SK-N-SH (cell line): ENCODE measurements at regions of chr3 and their contacts with region 1.

Region 1: DNA sequence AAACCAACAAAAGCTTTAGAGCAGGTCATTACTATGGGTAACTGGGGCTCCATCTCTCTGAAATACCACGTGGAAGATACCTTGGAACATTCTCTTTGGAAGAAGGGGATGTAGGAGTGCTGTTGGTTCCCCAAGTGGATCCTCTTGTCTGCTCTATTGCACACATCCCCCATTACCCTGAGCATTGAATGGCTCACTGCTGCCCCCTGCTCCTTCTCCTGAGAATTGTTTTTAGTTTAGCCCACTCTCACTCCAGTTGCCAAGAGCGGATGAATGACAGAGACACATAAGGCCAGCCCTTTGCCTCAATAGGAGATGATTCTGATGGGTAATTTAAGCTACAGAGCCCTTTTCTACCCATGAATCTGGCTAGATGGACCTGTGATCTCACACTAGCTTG is 135.6 kb upstream of the SUCLG2 start:
- DNase-seq: peak; percentile 56
- H3K4me3 ChIP-seq: no peak overlapping the region
- H3K27ac ChIP-seq: no peak overlapping the region
- H3K4me1 ChIP-seq: no peaks in the 10 kb centered on the region
- H3K27me3 ChIP-seq: no peaks in the 10 kb centered on the region
- CTCF ChIP-seq: peak; percentile 67
- EP300 ChIP-seq: no peak
- RAD21 ChIP-seq: peak; percentile 94

Region 2: DNA sequence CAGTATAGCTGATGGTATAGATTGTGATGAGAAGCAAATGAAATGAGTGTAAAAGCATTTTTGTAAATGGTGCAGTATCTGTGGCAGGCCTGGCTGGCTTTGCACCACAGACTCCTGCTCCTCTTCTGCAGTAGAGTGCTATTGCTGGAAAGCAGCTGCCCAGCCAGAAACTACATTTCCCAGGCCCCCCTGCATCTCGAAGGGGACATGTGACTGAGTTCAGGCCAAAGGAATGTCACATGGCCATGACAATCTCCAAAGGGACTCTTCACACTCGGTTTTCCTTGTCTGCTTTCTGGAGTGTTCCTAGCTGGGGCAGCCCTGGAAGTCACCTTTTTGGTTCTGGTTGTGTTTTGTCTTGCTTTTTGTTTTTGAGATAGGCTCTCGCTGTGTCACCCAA is 412.7 kb before region 1 on chr3:
- CTCF ChIA-PET with region 1: interaction called, 159 read pairs
- POLR2A ChIA-PET with region 1: no interaction called
- DNase-seq: no peak
- H3K4me3 ChIP-seq: no peak overlapping the region
- H3K27ac ChIP-seq: no peak overlapping the region
- H3K4me1 ChIP-seq: no peaks in the 10 kb centered on the region
- H3K27me3 ChIP-seq: no peaks in the 10 kb centered on the region
- CTCF ChIP-seq: no peak
- EP300 ChIP-seq: no peak
- RAD21 ChIP-seq: no peak

Region 3: DNA sequence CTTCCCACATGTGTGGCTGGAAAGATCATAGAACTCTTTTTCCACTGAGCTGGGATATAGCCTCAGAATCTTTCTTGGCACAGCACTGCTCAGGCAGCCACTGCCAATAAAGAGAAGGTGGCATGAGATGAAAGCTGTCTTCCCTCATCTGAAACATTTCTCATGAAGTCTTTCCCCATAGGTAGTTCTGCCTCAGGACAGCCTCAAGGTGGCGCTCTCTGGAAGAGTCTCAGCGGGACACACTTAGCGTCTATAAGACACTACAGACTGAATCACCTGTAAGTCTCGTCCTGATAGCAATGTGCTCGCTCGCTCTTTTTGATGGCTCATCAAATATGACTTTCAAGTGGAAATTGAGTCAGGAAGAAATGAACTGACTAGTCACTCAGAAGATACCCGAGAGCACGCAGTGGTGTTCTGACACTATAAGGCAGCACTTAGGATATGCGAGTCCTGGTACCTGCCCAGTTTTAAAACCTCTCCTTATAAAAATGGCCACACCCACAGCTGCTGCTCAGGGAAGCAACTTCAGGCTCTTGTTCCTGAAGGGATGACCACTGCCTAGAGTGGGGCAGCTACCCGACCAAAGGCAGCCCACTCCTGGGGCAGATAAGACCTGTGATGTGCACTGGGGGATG is 405.2 kb before region 1 on chr3:
- CTCF ChIA-PET with region 1: interaction called, 159 read pairs
- POLR2A ChIA-PET with region 1: no interaction called
- DNase-seq: peak; percentile 42
- H3K4me3 ChIP-seq: no peak overlapping the region
- H3K27ac ChIP-seq: no peak overlapping the region
- H3K4me1 ChIP-seq: no peaks in the 10 kb centered on the region
- H3K27me3 ChIP-seq: no peaks in the 10 kb centered on the region
- CTCF ChIP-seq: peak; percentile 71
- EP300 ChIP-seq: no peak
- RAD21 ChIP-seq: peak; percentile 77

Region 4: GRCh38 chr3:67719333-67719732 is 70.7 kb before region 1 on chr3:
- CTCF ChIA-PET with region 1: no interaction called
- POLR2A ChIA-PET with region 1: no interaction called
- DNase-seq: no peak
- H3K4me3 ChIP-seq: no peak overlapping the region
- H3K27ac ChIP-seq: no peak overlapping the region
- H3K4me1 ChIP-seq: no peaks in the 10 kb centered on the region
- H3K27me3 ChIP-seq: no peaks in the 10 kb centered on the region
- CTCF ChIP-seq: no peak
- EP300 ChIP-seq: no peak
- RAD21 ChIP-seq: no peak

Region 5: GRCh38 chr3:67774676-67775075 is 15.4 kb before region 1 on chr3:
- CTCF ChIA-PET with region 1: interaction called, 12 read pairs
- POLR2A ChIA-PET with region 1: no interaction called
- DNase-seq: no peak
- H3K4me3 ChIP-seq: no peak overlapping the region
- H3K27ac ChIP-seq: no peak overlapping the region
- H3K4me1 ChIP-seq: no peaks in the 10 kb centered on the region
- H3K27me3 ChIP-seq: no peaks in the 10 kb centered on the region
- CTCF ChIP-seq: no peak
- EP300 ChIP-seq: no peak
- RAD21 ChIP-seq: no peak